Sciatic nerve (tissue), 2 donors: ENCODE measurements at regions of chr2 and their contacts with region 1.

Region 1: DNA sequence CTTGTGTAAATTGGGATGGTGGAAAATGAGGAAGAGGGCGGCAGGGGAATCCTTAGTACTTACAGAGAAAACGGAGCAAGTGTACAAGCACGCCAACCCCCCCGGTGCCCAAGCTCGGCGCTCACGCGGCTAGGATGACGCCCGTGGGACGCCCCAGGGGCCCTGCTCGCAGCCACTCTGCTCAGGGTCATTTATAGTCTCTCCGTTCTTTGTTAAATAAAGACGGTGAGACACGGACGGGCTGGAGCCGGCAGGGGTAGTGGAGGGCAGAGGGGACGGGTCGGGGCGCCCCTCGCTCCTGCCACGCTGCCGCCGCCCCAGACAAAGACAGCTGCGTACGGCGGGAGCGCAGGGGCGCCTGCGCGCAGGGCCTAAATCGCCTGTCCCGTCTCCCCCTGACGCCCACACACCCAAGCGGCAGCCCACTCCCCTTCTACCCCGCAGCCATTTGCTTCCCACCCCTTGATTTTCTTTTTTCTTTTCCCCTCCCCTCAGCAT is 37.8 kb downstream of the PCBP1 start:
- DNase-seq: peak; percentile 88
- ATAC-seq: peak; percentile 76

Region 2: GRCh38 chr2:70086838-70087701 is 38.0 kb before region 1 on chr2 and contains the start of gene PCBP1:
- intact Hi-C with region 1: loop called (anchors 5 kb)
- DNase-seq: peak; percentile 99
- ATAC-seq: peak; percentile 95
- total RNA-seq, gene PCBP1: 285 TPM